Esophagus muscularis mucosa (tissue), 4 donors: ENCODE measurements at regions of chr18 and their contacts with region 1.

Region 1: DNA sequence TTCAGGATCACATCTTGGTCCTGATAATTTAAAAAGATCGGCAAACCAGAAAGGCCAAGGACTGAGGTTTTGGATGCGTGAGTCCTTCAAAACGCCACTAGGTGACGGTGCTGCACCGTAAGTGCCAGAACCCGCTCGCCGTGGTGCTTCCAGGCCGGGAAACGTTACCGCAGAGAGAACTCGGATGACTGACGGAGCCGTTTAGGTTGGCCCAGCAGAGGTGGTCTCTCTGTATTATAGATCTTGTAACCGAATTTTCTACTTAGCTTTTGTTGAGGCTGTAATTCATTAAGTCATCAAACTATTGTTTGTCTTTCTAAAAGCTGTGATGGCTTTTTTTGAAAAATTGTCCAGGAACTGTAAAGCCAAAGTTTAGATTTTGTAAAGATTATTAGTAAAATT is 39.8 kb upstream of the ADCYAP1 start:
- DNase-seq: no peak
- H3K4me3 ChIP-seq: no peak overlapping the region
- H3K27ac ChIP-seq: no peak overlapping the region
- H3K4me1 ChIP-seq: no peaks in the 10 kb centered on the region
- H3K27me3 ChIP-seq: peaks cover 0 to 27% (median 0%) of the 10 kb centered on the region in 4 donors
- CTCF ChIP-seq: peak; percentile 81 to 99 (median 90)
- EP300 ChIP-seq: no peak
- POLR2A ChIP-seq: no peak

Region 2: GRCh38 chr18:961644-962355 is 96.9 kb after region 1 on chr18:
- intact Hi-C with region 1: loop called (anchors 5 kb)
- DNase-seq: no peak
- H3K4me3 ChIP-seq: peak overlapping the region; percentile 36 to 53 (median 40)
- H3K27ac ChIP-seq: no peak overlapping the region
- H3K4me1 ChIP-seq: peaks cover 0 to 10% (median 4%) of the 10 kb centered on the region in 4 donors
- H3K27me3 ChIP-seq: peaks cover 0 to 23% (median 2%) of the 10 kb centered on the region in 4 donors
- CTCF ChIP-seq: peak; percentile 84 to 96 (median 89)
- EP300 ChIP-seq: no peak
- POLR2A ChIP-seq: no peak